Activated naive CD8-positive, alpha-beta T cell treated with anti-CD3 and anti-CD28 coated beads, Interleukin-2, amount 10 ng/mL, durations not matched to agents 7 days and 5 days (primary cell): ENCODE measurements at regions of chr2 and their contacts with region 1.

Region 1: GRCh38 chr2:240566203-240567136 is 1.8 kb upstream of the RNPEPL1 start:
- DNase-seq: peak; percentile 97
- ATAC-seq: peak; percentile 69
- H3K4me3 Mint-ChIP-seq: peak overlapping the region; percentile 96
- H3K27ac Mint-ChIP-seq: peak overlapping the region; percentile 96
- H3K4me1 Mint-ChIP-seq: peaks cover 56% of the 10 kb centered on the region
- H3K27me3 Mint-ChIP-seq: no peaks in the 10 kb centered on the region

Region 2: DNA sequence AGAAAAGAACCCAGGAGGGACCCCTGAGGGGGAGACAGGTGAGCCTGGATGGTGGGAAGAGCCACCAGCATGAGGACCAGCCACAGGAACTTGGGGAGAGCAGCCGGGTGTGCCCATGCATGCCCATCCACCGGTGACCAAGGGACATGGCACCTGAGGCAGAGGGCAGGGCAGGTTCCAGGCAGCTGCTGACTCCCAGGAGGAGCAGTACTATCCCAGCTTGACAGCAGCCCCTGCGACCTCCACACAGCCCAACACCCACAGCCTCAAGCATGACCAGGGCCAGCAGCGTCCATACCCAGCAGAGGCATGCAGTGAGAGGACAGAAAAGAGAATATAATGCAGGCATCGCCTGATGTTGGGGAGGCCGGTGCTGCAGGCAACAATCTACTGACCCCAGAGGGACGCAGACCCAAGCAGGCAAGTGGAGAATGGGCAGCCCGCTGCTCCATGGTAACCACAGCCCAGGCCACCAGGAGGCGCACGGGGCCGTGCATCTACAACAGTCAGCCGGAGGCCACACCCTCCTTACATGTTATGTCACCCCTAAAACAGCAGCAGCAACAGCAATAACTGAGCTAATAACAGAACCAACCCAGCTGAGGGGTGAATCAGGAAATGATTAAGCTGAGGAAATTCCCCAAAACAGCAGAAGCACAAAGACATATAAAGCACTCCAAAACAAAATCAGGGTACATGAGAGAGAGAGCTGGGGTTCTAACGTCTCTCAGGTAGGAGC is 52.8 kb before region 1 on chr2:
- POLR2A ChIA-PET with region 1: interaction called, 11 read pairs
- DNase-seq: peak; percentile 85
- ATAC-seq: peak; percentile 95
- H3K4me3 Mint-ChIP-seq: no peak overlapping the region
- H3K27ac Mint-ChIP-seq: peak overlapping the region; percentile 74
- H3K4me1 Mint-ChIP-seq: peaks cover 6% of the 10 kb centered on the region
- H3K27me3 Mint-ChIP-seq: no peaks in the 10 kb centered on the region

Region 3: GRCh38 chr2:240579071-240579762 is 12.7 kb after region 1 on chr2:
- POLR2A ChIA-PET with region 1: interaction called, 178 read pairs
- DNase-seq: no peak
- ATAC-seq: peak; percentile 10
- H3K4me3 Mint-ChIP-seq: no peak overlapping the region
- H3K27ac Mint-ChIP-seq: peak overlapping the region; percentile 69
- H3K4me1 Mint-ChIP-seq: peaks cover 20% of the 10 kb centered on the region
- H3K27me3 Mint-ChIP-seq: no peaks in the 10 kb centered on the region

Region 4: DNA sequence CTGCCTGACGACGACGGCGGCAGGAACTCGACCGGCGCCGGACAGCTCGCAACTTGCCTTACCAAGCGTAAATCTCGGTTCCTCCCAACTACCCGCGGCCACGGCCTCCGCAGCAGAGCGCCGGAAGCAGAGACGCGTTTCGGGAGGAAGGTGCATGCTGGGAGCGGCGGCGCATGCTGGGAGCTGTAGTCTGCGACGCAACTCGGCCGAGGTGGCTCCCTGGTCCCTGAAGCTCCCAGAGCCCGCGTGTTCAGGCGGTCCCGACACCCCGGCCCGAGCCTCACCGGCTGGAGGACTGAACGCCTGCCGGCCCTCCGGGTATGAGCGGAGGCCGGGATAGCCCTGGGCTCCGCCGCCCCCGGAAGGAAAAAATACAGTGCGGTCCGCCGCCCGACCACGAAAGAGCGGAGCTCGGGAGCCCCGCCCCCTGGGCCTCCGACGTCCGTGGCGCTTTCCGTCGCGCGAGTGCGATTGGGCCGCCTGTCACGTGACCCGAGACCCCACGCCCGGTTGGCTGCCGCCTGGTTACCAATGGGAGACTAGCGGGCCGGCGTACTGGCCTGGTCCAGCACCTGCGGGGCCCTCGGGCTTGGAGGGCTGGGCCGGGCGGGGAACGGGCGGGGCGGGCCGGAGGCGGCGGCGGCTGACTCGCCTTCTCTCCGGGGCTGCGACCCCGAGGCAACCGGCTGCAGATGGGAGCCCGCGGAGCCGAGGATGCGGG is 19.9 kb after region 1 on chr2 and contains the start of gene CAPN10:
- POLR2A ChIA-PET with region 1: interaction called, 178 read pairs
- DNase-seq: peak; percentile 98
- ATAC-seq: peak; percentile 89
- H3K4me3 Mint-ChIP-seq: peak within 1 kb of the TSS; percentile 95
- H3K27ac Mint-ChIP-seq: peak within 1 kb of the TSS; percentile 95
- H3K4me1 Mint-ChIP-seq: peaks cover 39% of the 10 kb centered on the region
- H3K27me3 Mint-ChIP-seq: no peaks in the 10 kb centered on the region
- total RNA-seq, gene CAPN10: 72.3 to 74.2 TPM

Region 5: DNA sequence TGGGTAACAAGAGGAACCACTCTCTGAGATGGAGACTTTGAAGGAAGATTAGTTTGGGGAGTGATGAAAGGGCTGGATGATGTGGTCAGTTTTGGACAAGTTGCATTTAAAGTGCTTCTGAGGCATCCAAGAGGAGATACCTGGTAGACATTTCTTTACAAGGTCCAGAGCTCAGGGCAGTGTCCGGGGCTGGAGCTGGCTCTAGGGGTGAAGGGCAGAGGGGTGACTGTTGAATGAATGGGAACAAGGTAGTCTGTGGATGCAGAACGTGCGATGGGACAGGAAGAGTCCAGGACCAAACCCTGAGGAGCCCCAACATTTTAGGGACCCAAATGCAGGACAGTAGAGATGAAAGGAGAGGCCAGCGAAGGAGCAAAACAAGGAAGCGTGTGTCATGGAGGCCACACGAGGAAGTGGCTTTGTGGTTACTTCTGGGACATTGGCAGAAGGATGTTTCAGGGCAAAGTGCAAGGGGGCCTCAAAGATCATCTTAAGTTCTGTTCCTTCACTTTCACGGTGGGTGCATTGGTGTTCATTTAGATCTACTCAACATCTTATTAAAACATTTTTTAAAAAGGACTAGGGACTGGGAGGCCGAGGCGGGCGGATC is 45.2 kb after region 1 on chr2:
- POLR2A ChIA-PET with region 1: interaction called, 19 read pairs
- DNase-seq: peak; percentile 47
- ATAC-seq: peak; percentile 34
- H3K4me3 Mint-ChIP-seq: no peak overlapping the region
- H3K27ac Mint-ChIP-seq: no peak overlapping the region
- H3K4me1 Mint-ChIP-seq: peaks cover 23% of the 10 kb centered on the region
- H3K27me3 Mint-ChIP-seq: no peaks in the 10 kb centered on the region

Region 6: GRCh38 chr2:240624950-240625621 is 58.6 kb after region 1 on chr2 and contains the start of gene GPR35:
- POLR2A ChIA-PET with region 1: interaction called, 39 read pairs
- DNase-seq: peak; percentile 82
- ATAC-seq: peak; percentile 59
- H3K4me3 Mint-ChIP-seq: peak within 1 kb of the TSS; percentile 83
- H3K27ac Mint-ChIP-seq: peak within 1 kb of the TSS; percentile 100
- H3K4me1 Mint-ChIP-seq: peaks cover 49% of the 10 kb centered on the region
- H3K27me3 Mint-ChIP-seq: no peaks in the 10 kb centered on the region
- total RNA-seq, gene GPR35: 19.2 to 19.3 TPM